ENCODE measurements at regions of chr20 and their contacts with region 1.

Region 1: DNA sequence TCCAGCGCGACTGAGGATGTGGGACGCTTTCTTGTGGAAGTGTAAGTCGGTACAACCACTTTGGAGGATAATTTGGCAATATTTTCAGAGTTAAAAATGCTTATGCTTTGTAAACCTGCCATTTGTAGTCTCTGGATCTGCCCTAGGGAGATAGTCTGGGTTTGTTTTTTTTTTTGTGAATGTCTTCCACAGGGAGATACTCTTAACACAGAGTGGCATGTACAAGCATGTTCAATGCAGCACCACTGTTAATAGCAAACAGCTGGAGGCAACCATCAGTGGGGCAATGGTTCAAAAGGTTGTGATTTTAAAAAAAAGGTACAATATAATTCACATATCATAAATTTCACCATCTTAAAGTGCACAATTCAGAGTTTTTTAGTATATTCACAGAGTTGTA is 22.4 kb downstream of the SLC9A8 start:
- DNase-seq: no peak
- ATAC-seq: no peak

Region 2: DNA sequence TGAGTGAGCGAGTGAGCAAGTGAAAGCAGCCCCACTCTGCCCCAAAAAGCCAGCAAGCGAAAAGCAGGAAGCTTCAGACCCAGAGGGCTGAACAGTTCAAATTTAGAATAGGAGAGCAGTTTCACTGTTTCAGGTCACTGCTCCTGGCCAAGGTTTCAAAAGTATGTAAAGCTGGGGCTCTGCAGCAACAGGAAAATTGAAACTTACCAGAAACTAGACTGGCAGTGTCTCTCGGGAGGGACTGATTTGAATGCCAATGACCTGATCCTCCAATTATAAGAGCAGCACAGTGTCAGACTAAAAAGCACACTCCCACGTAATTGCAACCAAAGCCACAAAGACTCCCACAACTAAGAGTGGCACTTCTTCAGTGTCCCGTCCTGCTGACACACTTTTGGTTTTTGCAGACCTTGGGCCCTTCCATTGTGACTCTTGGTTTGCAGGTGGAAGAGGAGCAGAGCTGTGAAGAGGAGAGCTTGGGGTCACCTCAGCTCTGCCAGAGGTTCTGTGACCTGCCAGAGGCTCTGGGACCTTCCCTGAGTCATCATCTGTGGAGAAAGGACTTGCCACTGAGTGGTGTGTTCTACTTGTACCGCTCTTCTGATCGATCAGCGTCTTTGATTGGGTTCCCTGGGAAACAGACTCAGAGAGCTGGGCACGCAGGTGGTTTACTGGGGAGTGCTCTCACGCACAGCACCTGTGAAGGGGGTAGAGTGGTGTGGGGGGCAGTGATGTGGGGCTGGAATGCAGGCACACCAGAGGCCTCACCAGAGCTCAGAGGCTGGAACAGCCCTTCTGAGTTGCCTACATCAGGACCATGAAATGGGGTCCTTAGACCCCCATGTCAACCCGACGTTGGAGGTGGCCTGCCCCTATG is 214.4 kb before region 1 on chr20:
- intact Hi-C with region 1: loop called in 1 of 2 experiments (anchors 5 kb)
- DNase-seq: no peak
- ATAC-seq: no peak

Region 3: GRCh38 chr20:49742948-49743347 is 92.1 kb before region 1 on chr20:
- intact Hi-C with region 1: no loop called
- DNase-seq: no peak
- ATAC-seq: peak; percentile 73

Region 4: DNA sequence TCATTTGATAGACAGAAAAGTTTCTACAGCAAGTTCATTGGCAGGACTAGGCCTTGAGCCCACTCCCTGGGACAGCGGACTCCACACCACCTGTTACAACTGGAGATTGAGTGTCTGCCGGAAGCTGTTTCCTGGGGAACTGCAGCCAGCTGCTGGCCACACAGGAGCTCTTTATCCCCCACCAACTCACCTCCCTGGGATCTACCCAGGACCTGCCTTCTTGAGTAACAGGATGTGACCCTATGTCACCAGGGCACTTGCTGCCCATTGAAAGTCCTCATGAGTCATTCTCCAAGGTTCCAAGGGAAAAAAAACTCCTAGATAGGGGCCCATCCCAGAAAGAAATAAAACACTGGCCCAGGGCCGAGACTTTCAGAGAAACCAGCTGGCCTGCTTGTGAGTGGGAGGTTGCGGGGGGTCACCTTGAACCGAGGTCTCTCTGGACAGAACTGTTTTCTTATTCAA is 59.8 kb before region 1 on chr20:
- intact Hi-C with region 1: loop called in 1 of 2 experiments (anchors 2 kb)
- DNase-seq: peak; percentile 47 to 81
- ATAC-seq: peak; percentile 76

Region 5: GRCh38 chr20:49969946-49970345 is 134.9 kb after region 1 on chr20:
- intact Hi-C with region 1: no loop called
- DNase-seq: no peak
- ATAC-seq: peak; percentile 50